Activated CD4-positive, alpha-beta T cell treated with anti-CD3 and anti-CD28 coated beads for 36 hours (primary cell): ENCODE measurements at regions of chrX and their contacts with region 1.

Region 1: GRCh38 chrX:153971450-153972367 is at the start of gene HCFC1:
- DNase-seq: peak; percentile 94
- ATAC-seq: peak; percentile 34
- H3K4me3 Mint-ChIP-seq: peak within 1 kb of the TSS; percentile 94
- H3K27ac Mint-ChIP-seq: peak within 1 kb of the TSS; percentile 100
- H3K4me1 Mint-ChIP-seq: peaks cover 31% of the 10 kb centered on the region
- H3K27me3 Mint-ChIP-seq: no peaks in the 10 kb centered on the region
- total RNA-seq, gene HCFC1: 99.5 to 147 TPM

Region 2: DNA sequence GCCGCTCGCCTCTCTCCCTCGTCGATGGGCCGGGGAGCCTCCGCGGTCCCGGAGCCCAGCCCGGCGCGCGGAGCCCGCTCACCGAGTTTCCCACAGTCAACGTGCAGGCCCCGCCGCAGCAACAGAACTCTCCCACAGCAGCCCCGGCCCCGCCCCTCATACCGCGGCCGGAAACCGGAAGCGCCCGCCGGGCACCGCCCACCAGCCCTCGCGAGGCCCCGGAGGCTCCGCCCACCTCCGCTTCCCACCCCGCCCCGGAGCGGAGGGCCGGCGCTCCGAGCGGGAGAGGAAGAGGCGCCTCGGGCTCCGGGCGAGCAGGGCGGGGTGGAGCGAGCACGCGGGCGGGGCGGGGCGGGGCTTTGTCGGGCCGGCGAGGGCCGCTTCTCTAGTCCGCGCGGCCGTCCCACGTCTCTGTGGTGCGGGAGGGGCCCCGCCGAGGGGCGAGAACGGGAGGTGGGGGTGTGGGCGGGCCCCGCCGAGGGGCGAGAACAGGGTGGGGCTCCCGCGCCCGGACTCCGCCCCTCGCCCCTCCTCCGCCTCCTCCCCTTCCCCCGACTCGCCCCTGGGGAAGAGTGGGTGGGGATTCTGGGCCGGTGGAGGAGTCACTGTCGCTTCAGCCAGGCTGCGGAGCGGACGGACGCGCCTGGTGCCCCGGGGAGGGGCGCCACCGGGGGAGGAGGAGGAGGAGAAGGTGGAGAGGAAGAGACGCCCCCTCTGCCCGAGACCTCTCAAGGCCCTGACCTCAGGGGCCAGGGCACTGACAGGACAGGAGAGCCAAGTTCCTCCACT is 247.3 kb before region 1 on chrX and contains the starts of genes ABCD1 and BCAP31:
- CTCF ChIA-PET with region 1: interaction called, 4 read pairs
- POLR2A ChIA-PET with region 1: no interaction called
- intact Hi-C with region 1: loop called in 1 of 2 experiments (anchors 1 kb)
- DNase-seq: peak; percentile 93
- ATAC-seq: peak; percentile 84
- H3K4me3 Mint-ChIP-seq: peak within 1 kb of the TSS; percentile 89
- H3K27ac Mint-ChIP-seq: peak within 1 kb of the TSS; percentile 87
- H3K4me1 Mint-ChIP-seq: peaks cover 20% of the 10 kb centered on the region
- H3K27me3 Mint-ChIP-seq: no peaks in the 10 kb centered on the region
- total RNA-seq, gene ABCD1: 4.5 to 4.8 TPM
- total RNA-seq, gene BCAP31: 78.0 to 106 TPM

Region 3: GRCh38 chrX:153947009-153947769 is 24.5 kb before region 1 on chrX:
- CTCF ChIA-PET with region 1: interaction called, 19 read pairs
- POLR2A ChIA-PET with region 1: no interaction called
- intact Hi-C with region 1: no loop called
- DNase-seq: peak; percentile 89
- ATAC-seq: peak; percentile 87
- H3K4me3 Mint-ChIP-seq: no peak overlapping the region
- H3K27ac Mint-ChIP-seq: peak overlapping the region; percentile 87
- H3K4me1 Mint-ChIP-seq: peaks cover 14% of the 10 kb centered on the region
- H3K27me3 Mint-ChIP-seq: no peaks in the 10 kb centered on the region

Region 4: GRCh38 chrX:154097597-154098541 is 126.2 kb after region 1 on chrX and contains the start of gene MECP2:
- CTCF ChIA-PET with region 1: no interaction called
- POLR2A ChIA-PET with region 1: interaction called, 4 read pairs
- intact Hi-C with region 1: loop called in 1 of 2 experiments (anchors 1 kb)
- DNase-seq: peak; percentile 93
- ATAC-seq: peak; percentile 87
- H3K4me3 Mint-ChIP-seq: peak within 1 kb of the TSS; percentile 81
- H3K27ac Mint-ChIP-seq: peak within 1 kb of the TSS; percentile 96
- H3K4me1 Mint-ChIP-seq: peaks cover 56% of the 10 kb centered on the region
- H3K27me3 Mint-ChIP-seq: peaks cover 2% of the 10 kb centered on the region
- total RNA-seq, gene MECP2: 50.7 to 60.0 TPM

Region 5: DNA sequence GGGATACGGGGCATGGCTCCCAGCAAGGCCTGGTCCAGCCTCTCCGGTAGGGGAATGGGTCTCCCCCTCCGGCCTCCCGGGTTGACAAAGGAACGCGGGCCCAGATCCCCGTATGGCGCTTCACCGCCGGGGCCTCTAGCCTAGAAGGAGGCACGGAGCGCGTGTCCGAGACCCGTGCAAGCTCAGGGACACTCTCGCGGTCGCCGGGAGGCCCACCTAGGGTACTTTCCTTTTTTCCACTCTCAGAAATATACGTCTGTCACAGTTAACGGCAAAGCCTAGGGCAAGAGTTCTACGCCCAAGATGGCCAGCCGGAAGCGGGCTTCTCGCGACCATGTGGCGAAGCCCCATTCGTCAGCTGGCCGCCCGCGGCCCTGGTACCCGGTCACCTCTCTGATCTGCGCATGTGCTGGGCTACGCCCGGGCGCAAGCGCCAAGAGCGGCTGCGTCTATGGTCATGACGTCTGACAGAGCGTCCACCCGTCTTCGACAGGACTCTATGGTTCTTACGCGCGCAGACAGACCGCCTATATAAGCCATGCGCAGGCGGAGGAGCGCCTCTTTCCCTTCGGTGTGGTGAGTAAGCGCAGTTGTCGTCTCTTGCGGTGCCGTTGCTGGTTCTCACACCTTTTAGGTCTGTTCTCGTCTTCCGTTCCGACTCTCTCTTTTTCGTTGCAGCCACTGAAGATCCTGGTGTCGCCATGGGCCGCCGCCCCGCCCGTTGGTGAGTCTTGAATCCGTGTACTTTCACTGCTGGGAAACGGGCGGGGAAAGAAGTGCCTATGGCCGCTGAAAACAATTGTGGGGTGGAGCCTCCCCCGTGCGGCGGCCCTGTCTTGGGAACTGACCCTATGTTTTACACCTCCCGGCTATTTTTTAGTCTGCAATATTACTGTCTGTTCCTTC is 426.4 kb after region 1 on chrX and contains the start of gene RPL10:
- CTCF ChIA-PET with region 1: no interaction called
- POLR2A ChIA-PET with region 1: no interaction called
- intact Hi-C with region 1: loop called in 1 of 2 experiments (anchors 1 kb)
- DNase-seq: peak; percentile 94
- ATAC-seq: peak; percentile 80
- H3K4me3 Mint-ChIP-seq: peak within 1 kb of the TSS; percentile 99
- H3K27ac Mint-ChIP-seq: peak within 1 kb of the TSS; percentile 100
- H3K4me1 Mint-ChIP-seq: no peaks in the 10 kb centered on the region
- H3K27me3 Mint-ChIP-seq: no peaks in the 10 kb centered on the region
- total RNA-seq, gene RPL10: 1,286 to 2,705 TPM

Region 6: GRCh38 chrX:154490414-154491083 is 518.8 kb after region 1 on chrX and contains the start of gene SLC10A3:
- CTCF ChIA-PET with region 1: no interaction called
- POLR2A ChIA-PET with region 1: no interaction called
- intact Hi-C with region 1: loop called in 1 of 2 experiments (anchors 1 kb)
- DNase-seq: peak; percentile 94
- ATAC-seq: peak; percentile 91
- H3K4me3 Mint-ChIP-seq: peak within 1 kb of the TSS; percentile 85
- H3K27ac Mint-ChIP-seq: peak within 1 kb of the TSS; percentile 89
- H3K4me1 Mint-ChIP-seq: peaks cover 17% of the 10 kb centered on the region
- H3K27me3 Mint-ChIP-seq: no peaks in the 10 kb centered on the region
- total RNA-seq, gene SLC10A3: 10.4 to 11.3 TPM